CD8-positive, alpha-beta T cell (primary cell): ENCODE measurements at regions of chr1 and their contacts with region 1.

Region 1: GRCh38 chr1:88891318-88891950 is at the start of gene GTF2B:
- DNase-seq: peak; percentile 86 to 99 (median 94)
- ATAC-seq: peak; percentile 90
- H3K4me3 ChIP-seq: peak within 1 kb of the TSS; percentile 89 to 92
- H3K4me3 Mint-ChIP-seq: peak within 1 kb of the TSS; percentile 92
- H3K27ac ChIP-seq: peak within 1 kb of the TSS; percentile 92 to 93
- H3K27ac Mint-ChIP-seq: peak within 1 kb of the TSS; percentile 95
- H3K4me1 ChIP-seq: peaks cover 35% of the 10 kb centered on the region
- H3K4me1 Mint-ChIP-seq: peaks cover 45% of the 10 kb centered on the region
- H3K27me3 ChIP-seq: no peaks in the 10 kb centered on the region
- H3K27me3 Mint-ChIP-seq: no peaks in the 10 kb centered on the region
- CTCF ChIP-seq: no peak
- total RNA-seq, gene GTF2B: 85.4 to 91.3 TPM

Region 2: GRCh38 chr1:86906419-86906818 is 1985.0 kb before region 1 on chr1:
- CTCF ChIA-PET with region 1: no interaction called
- POLR2A ChIA-PET with region 1: no interaction called
- intact Hi-C with region 1: loop called in 1 of 2 experiments (anchors 10 kb)
- DNase-seq: no peak
- ATAC-seq: no peak
- H3K4me3 ChIP-seq: no peak overlapping the region
- H3K4me3 Mint-ChIP-seq: no peak overlapping the region
- H3K27ac ChIP-seq: no peak overlapping the region
- H3K27ac Mint-ChIP-seq: no peak overlapping the region
- H3K4me1 ChIP-seq: peaks cover 48% of the 10 kb centered on the region
- H3K4me1 Mint-ChIP-seq: peaks cover 48% of the 10 kb centered on the region
- H3K27me3 ChIP-seq: no peaks in the 10 kb centered on the region
- H3K27me3 Mint-ChIP-seq: no peaks in the 10 kb centered on the region
- CTCF ChIP-seq: no peak

Region 3: GRCh38 chr1:87335175-87335884 is 1556.1 kb before region 1 on chr1:
- CTCF ChIA-PET with region 1: no interaction called
- POLR2A ChIA-PET with region 1: no interaction called
- intact Hi-C with region 1: loop called (anchors 5 to 10 kb)
- DNase-seq: peak in 8 of 9 experiments; percentile 48 to 77 (median 64)
- ATAC-seq: peak; percentile 53
- H3K4me3 ChIP-seq: peak overlapping the region; percentile 53 to 60
- H3K4me3 Mint-ChIP-seq: peak overlapping the region; percentile 89
- H3K27ac ChIP-seq: peak overlapping the region; percentile 14 to 62
- H3K27ac Mint-ChIP-seq: peak overlapping the region; percentile 90
- H3K4me1 ChIP-seq: peaks cover 35% of the 10 kb centered on the region
- H3K4me1 Mint-ChIP-seq: peaks cover 56% of the 10 kb centered on the region
- H3K27me3 ChIP-seq: no peaks in the 10 kb centered on the region
- H3K27me3 Mint-ChIP-seq: no peaks in the 10 kb centered on the region
- CTCF ChIP-seq: no peak

Region 4: DNA sequence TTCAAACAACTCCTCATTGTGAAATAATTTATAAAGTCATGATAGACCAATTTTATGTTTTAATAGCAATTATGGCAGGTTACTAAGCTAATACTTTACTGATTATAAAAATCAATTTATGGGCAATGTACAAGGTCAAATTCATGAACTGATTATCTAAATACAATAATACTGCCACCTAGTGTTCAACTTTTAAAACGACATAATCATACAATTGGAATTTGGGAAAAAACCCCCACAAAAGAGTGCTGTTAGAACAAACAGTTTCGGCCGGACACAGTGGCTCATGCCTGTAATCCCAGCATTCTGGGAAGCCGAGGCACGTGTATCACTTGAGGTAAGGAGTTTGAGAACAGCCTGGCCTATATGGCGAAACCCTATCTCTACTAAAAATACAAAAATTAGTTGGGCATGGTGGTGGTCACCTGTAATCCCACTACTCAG is 14.0 kb before region 1 on chr1:
- CTCF ChIA-PET with region 1: interaction called, 42 read pairs
- POLR2A ChIA-PET with region 1: interaction called, 7 read pairs
- intact Hi-C with region 1: loop called (anchors 1 to 2 kb)
- DNase-seq: peak in 2 of 9 experiments; percentile 27 to 45
- ATAC-seq: no peak
- H3K4me3 ChIP-seq: no peak overlapping the region
- H3K4me3 Mint-ChIP-seq: no peak overlapping the region
- H3K27ac ChIP-seq: no peak overlapping the region
- H3K27ac Mint-ChIP-seq: no peak overlapping the region
- H3K4me1 ChIP-seq: peaks cover 25% of the 10 kb centered on the region
- H3K4me1 Mint-ChIP-seq: peaks cover 60% of the 10 kb centered on the region
- H3K27me3 ChIP-seq: no peaks in the 10 kb centered on the region
- H3K27me3 Mint-ChIP-seq: no peaks in the 10 kb centered on the region
- CTCF ChIP-seq: peak; percentile 89

Region 5: DNA sequence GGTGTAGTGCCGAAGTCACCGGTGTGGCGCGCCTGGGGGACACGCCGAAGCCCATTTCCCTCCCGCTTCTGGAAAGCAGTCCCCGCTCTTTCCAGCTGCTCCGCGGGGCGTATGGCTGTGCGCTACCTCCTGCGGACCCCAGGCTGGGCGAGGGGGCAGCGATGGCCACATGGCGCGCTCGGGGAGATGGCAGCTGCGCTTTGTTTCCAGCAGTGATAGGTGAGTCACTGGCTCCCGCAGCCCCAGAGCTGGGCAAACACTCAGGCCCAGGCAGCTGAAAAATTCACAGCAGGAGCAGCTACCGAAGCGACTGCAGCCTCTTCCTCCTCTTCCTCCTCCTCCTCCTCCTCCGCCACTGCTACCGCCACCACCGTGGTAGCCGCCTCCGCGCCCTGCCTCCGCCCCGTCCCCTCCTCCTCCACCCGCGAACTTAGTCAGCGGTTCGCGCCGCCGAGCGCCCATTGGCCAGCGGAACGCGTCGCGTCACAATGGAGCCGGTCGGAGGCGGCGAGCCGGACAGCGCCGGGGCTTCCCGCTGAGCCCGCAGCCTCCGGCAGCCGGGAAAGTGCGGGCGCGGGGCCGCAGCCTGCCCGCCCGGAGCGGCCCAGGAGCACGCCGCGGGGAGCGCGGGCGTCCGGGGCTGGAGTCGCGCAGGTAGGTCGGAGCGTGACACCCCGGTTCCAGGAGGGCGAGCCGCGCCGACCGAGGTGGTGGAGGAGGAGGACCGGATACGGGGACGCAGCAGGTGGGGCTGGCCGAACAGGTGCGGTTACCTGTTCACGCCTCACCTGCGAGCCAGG is 633.1 kb after region 1 on chr1 and contains the start of gene LRRC8B:
- CTCF ChIA-PET with region 1: no interaction called
- POLR2A ChIA-PET with region 1: no interaction called
- intact Hi-C with region 1: loop called in 1 of 2 experiments (anchors 1 kb)
- DNase-seq: peak; percentile 73 to 94 (median 86)
- ATAC-seq: peak; percentile 80
- H3K4me3 ChIP-seq: peak within 1 kb of the TSS; percentile 92 to 98
- H3K4me3 Mint-ChIP-seq: no peak within 1 kb of the TSS
- H3K27ac ChIP-seq: peak within 1 kb of the TSS; percentile 81 to 91
- H3K27ac Mint-ChIP-seq: peak within 1 kb of the TSS; percentile 90
- H3K4me1 ChIP-seq: peaks cover 38% of the 10 kb centered on the region
- H3K4me1 Mint-ChIP-seq: peaks cover 25% of the 10 kb centered on the region
- H3K27me3 ChIP-seq: no peaks in the 10 kb centered on the region
- H3K27me3 Mint-ChIP-seq: no peaks in the 10 kb centered on the region
- CTCF ChIP-seq: no peak
- total RNA-seq, gene LRRC8B: 11.8 to 14.5 TPM

Region 6: GRCh38 chr1:89994805-89995597 is 1103.6 kb after region 1 on chr1 and contains the start of gene ZNF326:
- CTCF ChIA-PET with region 1: no interaction called
- POLR2A ChIA-PET with region 1: no interaction called
- intact Hi-C with region 1: loop called (anchors 2 to 5 kb)
- DNase-seq: peak; percentile 89 to 96 (median 93)
- ATAC-seq: peak; percentile 97
- H3K4me3 ChIP-seq: peak within 1 kb of the TSS; percentile 72 to 93
- H3K4me3 Mint-ChIP-seq: peak within 1 kb of the TSS; percentile 99
- H3K27ac ChIP-seq: peak within 1 kb of the TSS; percentile 78 to 82
- H3K27ac Mint-ChIP-seq: peak within 1 kb of the TSS; percentile 96
- H3K4me1 ChIP-seq: peaks cover 25% of the 10 kb centered on the region
- H3K4me1 Mint-ChIP-seq: peaks cover 35% of the 10 kb centered on the region
- H3K27me3 ChIP-seq: no peaks in the 10 kb centered on the region
- H3K27me3 Mint-ChIP-seq: no peaks in the 10 kb centered on the region
- CTCF ChIP-seq: no peak
- total RNA-seq, gene ZNF326: 55.5 to 59.1 TPM